Heart right ventricle (tissue), 16 donors: ENCODE measurements at regions of chrX and their contacts with region 1.

Region 1: DNA sequence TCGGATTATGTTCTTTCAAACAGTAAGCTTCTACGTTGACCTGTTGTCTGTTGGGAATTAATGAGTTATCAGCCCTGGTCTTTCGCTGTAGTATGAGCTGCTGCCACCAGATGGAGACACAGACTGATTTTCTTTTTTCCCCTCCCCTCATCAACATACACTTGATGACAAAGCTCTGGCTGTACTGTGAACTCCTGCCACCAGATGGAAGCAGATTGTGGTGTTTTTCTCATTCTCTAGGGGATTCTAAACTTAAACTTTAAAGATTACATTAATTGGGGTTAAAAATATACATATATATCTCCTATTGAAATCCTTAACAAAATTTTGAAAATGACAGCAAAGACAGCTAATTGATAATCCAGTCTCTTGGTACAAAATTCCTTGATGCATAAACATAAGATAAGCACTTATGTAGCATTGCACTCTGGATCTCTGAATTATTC is 44.8 kb downstream of the SMS start:
- DNase-seq: peak; percentile 17 to 50
- ATAC-seq: peak; percentile 73 to 89 (median 79)
- H3K4me3 ChIP-seq: no peak overlapping the region
- H3K27ac ChIP-seq: no peak overlapping the region
- H3K4me1 ChIP-seq: no peaks in the 10 kb centered on the region
- H3K27me3 ChIP-seq: peaks cover 0 to 22% (median 0%) of the 10 kb centered on the region in 7 donors
- CTCF ChIP-seq: peak; percentile 59 to 90 (median 82)

Region 2: DNA sequence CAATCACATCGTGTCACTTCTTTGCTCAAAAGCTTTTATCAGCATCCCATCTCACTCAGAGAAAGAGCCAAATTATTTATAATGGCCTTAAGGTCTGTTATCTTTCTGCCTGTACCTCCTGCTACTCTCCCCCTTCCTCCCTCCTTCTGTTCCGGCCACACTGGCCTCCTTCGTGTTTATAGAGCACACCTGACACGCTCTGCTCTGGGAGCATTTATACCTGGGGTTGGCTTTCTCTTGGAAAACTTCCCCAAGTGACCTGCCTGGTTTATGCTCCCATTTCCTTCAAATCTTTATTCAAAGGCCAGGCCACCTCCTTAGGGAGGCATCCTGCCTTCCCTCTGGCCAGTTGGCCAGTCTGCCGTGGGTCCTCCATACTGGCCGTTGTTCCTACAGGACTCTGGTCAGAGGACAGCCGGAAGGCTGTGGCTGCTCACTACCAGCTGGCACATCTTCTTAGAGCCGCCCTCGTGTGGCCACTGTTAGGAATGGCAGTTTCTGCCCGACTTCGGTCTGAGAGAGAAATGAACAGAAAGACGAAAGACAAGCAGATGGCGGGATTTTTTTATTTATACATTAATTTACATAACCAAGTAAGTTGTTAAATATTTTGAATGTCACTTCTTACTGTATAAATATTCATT is 207.2 kb after region 1 on chrX:
- intact Hi-C with region 1: loop called in 3 of 10 experiments (anchors 5 to 10 kb)
- DNase-seq: peak; percentile 21 to 50
- ATAC-seq: peak in 5 of 8 donors; percentile 47 to 75 (median 63)
- H3K4me3 ChIP-seq: no peak overlapping the region
- H3K27ac ChIP-seq: no peak overlapping the region
- H3K4me1 ChIP-seq: peaks cover 0 to 3% (median 0%) of the 10 kb centered on the region in 9 donors
- H3K27me3 ChIP-seq: peaks cover 0 to 26% (median 0%) of the 10 kb centered on the region in 7 donors
- CTCF ChIP-seq: peak in 8 of 9 donors; percentile 30 to 85 (median 70)

Region 3: GRCh38 chrX:22748093-22748999 is 763.0 kb after region 1 on chrX:
- intact Hi-C with region 1: loop called in 2 of 10 experiments (anchors 10 kb)
- DNase-seq: peak; percentile 12 to 21
- ATAC-seq: peak; percentile 52 to 89 (median 76)
- H3K4me3 ChIP-seq: no peak overlapping the region
- H3K27ac ChIP-seq: no peak overlapping the region
- H3K4me1 ChIP-seq: no peaks in the 10 kb centered on the region
- H3K27me3 ChIP-seq: no peaks in the 10 kb centered on the region
- CTCF ChIP-seq: peak; percentile 16 to 77 (median 64)

Region 4: DNA sequence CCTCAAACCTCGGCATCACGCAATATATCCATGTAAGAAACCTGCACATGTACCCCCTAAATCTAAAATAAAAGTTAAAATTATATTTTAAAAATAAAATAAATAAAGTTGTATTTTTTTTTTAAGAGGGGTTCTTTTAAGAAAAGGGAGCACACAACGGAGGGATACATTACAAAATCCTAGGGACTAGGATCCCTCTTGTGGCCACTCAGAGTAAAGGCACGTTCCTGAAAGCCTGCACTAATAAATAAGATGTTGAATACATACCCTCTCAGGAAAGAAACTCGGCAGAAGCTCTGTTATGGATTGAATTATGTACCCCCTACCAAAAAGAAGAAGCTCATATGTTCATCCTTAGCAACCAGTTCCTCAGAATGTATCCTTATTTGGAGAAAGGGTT is 1631.0 kb after region 1 on chrX:
- intact Hi-C with region 1: loop called in 3 of 10 experiments (anchors 10 kb)
- DNase-seq: no peak
- ATAC-seq: no peak
- H3K4me3 ChIP-seq: no peak overlapping the region
- H3K27ac ChIP-seq: no peak overlapping the region
- H3K4me1 ChIP-seq: no peaks in the 10 kb centered on the region
- H3K27me3 ChIP-seq: peaks cover 0 to 36% (median 0%) of the 10 kb centered on the region in 7 donors
- CTCF ChIP-seq: peak in 8 of 9 donors; percentile 29 to 65 (median 54)